Activated CD4-positive, alpha-beta memory T cell treated with anti-CD3 and anti-CD28 coated beads for 36 hours (primary cell): ENCODE measurements at regions of chr4 and their contacts with region 1.

Region 1: GRCh38 chr4:77734928-77735327 is 84.2 kb downstream of the CNOT6L start:
- DNase-seq: peak; percentile 45
- H3K4me3 Mint-ChIP-seq: peak overlapping the region; percentile 45
- H3K27ac Mint-ChIP-seq: peak overlapping the region; percentile 66
- H3K4me1 Mint-ChIP-seq: peaks cover 44% of the 10 kb centered on the region
- H3K27me3 Mint-ChIP-seq: no peaks in the 10 kb centered on the region

Region 2: DNA sequence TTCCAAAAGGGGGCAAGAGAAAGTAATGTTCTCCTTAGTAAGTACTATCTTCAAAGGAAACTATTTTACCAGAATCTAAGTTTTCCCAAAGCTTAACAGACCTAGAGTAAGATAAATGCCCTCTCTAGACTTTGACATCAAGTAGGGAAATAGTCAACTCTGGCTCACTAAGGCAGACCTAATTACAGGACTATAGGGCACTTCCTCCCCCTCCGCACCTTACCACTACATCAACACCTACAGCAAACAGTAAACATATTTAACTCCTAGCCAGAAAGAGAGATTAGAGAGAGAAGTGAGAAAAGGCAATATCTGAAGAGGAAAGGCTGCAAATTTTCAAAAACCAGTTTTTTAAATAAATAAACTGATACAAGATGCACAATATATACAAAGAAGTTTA is 23.9 kb after region 1 on chr4:
- CTCF ChIA-PET with region 1: no interaction called
- POLR2A ChIA-PET with region 1: no interaction called
- intact Hi-C with region 1: no loop called
- DNase-seq: no peak
- H3K4me3 Mint-ChIP-seq: no peak overlapping the region
- H3K27ac Mint-ChIP-seq: no peak overlapping the region
- H3K4me1 Mint-ChIP-seq: peaks cover 22% of the 10 kb centered on the region
- H3K27me3 Mint-ChIP-seq: no peaks in the 10 kb centered on the region

Region 3: DNA sequence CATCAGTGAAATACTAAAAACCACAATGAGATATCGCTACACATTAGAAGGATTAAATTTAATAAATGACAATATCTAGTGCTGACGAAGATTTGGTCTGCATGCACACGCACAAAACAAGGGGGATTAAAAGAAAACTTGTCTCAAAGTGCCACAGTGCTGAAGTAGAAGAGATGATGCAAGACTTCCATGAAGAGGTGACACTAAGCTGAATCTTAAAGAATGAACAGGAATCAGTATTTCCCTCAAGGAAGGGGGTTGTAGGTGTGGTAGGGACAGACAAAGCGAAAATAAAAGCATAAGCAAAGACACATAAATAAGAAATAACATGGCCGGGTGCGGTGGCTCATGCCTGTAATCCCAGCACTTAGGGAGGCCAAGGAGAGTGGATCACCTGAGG is 50.7 kb after region 1 on chr4:
- CTCF ChIA-PET with region 1: no interaction called
- POLR2A ChIA-PET with region 1: no interaction called
- intact Hi-C with region 1: loop called (anchors 5 kb)
- DNase-seq: no peak
- H3K4me3 Mint-ChIP-seq: no peak overlapping the region
- H3K27ac Mint-ChIP-seq: peak overlapping the region; percentile 34
- H3K4me1 Mint-ChIP-seq: peaks cover 72% of the 10 kb centered on the region
- H3K27me3 Mint-ChIP-seq: no peaks in the 10 kb centered on the region